H1 (cell line): ENCODE measurements at regions of chr19 and their contacts with region 1.

Region 1: GRCh38 chr19:10835754-10836477 is at the start of gene TMED1:
- DNase-seq: peak; percentile 99 to 100
- H3K4me3 ChIP-seq: peak within 1 kb of the TSS; percentile 58 to 92 (median 76)
- H3K27ac ChIP-seq: peak within 1 kb of the TSS; percentile 97
- H3K4me1 ChIP-seq: peaks cover 3 to 10% (median 6%) of the 10 kb centered on the region in 4 experiments
- H3K27me3 ChIP-seq: peaks cover 0 to 4% (median 0%) of the 10 kb centered on the region in 4 experiments; a peak in 1 of 7 replicates
- CTCF ChIP-seq: no peak
- EP300 ChIP-seq: no peak
- POLR2A ChIP-seq: peak; percentile 55 to 94
- RAD21 ChIP-seq: no peak
- total RNA-seq, gene TMED1: 26.2 and 26.9 TPM in 2 replicates

Region 2: GRCh38 chr19:10760273-10760944 is 75.5 kb before region 1 on chr19:
- CTCF ChIA-PET with region 1: no interaction called
- POLR2A ChIA-PET with region 1: no interaction called
- DNase-seq: no peak
- H3K4me3 ChIP-seq: no peak overlapping the region
- H3K27ac ChIP-seq: no peak overlapping the region
- H3K4me1 ChIP-seq: peaks cover 3 to 13% (median 6%) of the 10 kb centered on the region in 4 experiments; a peak in 5 of 7 replicates
- H3K27me3 ChIP-seq: no peaks in the 10 kb centered on the region
- CTCF ChIP-seq: no peak
- EP300 ChIP-seq: no peak
- POLR2A ChIP-seq: no peak
- RAD21 ChIP-seq: no peak

Region 3: DNA sequence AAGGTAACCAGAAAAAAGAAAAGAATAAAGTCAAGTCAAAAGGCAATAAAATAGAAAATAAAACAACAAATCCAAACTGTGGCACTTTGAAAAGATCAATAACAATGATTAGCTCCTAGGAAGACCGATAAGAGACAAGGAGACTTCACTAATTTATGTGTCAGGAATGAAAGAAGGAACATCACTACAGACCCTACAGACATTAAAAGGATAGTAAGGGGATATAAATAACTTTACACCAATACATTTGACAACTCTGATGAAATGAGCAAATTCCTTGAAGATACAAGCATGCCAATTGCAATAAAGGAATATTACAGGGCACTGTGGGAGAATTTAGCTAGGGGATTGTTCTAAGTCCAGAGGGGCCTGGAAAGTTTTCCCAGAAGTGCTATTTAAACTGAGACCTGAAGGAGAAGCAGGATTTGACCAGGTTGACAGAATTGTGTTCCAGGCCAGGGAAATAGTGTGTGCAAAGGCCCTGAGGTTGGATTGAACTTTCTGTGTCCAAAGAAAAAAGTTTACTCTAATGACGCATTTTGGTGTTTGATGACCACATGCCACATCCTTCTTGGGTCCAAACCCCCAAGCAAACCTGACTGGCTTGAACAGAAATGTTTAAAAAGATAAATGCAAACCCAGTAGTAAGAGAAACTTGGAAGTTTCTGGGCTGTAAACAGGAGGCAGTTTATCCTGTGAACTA is 10.7 kb after region 1 on chr19:
- CTCF ChIA-PET with region 1: interaction called, 7 read pairs
- POLR2A ChIA-PET with region 1: interaction called, 11 read pairs
- DNase-seq: no peak
- H3K4me3 ChIP-seq: no peak overlapping the region
- H3K27ac ChIP-seq: no peak overlapping the region
- H3K4me1 ChIP-seq: no peaks in the 10 kb centered on the region
- H3K27me3 ChIP-seq: no peaks in the 10 kb centered on the region
- CTCF ChIP-seq: no peak
- EP300 ChIP-seq: no peak
- POLR2A ChIP-seq: no peak
- RAD21 ChIP-seq: no peak

Region 4: GRCh38 chr19:10884274-10884673 is 48.4 kb after region 1 on chr19:
- CTCF ChIA-PET with region 1: interaction called, 4 read pairs
- POLR2A ChIA-PET with region 1: interaction called, 24 read pairs
- DNase-seq: no peak
- H3K4me3 ChIP-seq: no peak overlapping the region
- H3K27ac ChIP-seq: no peak overlapping the region
- H3K4me1 ChIP-seq: peaks cover 26 to 63% (median 53%) of the 10 kb centered on the region in 4 experiments
- H3K27me3 ChIP-seq: no peaks in the 10 kb centered on the region
- CTCF ChIP-seq: no peak
- EP300 ChIP-seq: no peak
- POLR2A ChIP-seq: no peak
- RAD21 ChIP-seq: no peak